ENCODE measurements at regions of chr3 and their contacts with region 1.

Region 1: GRCh38 chr3:143001369-143002082 is at the start of gene U2SURP:
- DNase-seq: peak; percentile 93 to 95
- H3K4me3 ChIP-seq: peak within 1 kb of the TSS; percentile 89 to 95 (median 94)
- H3K27ac ChIP-seq: peak within 1 kb of the TSS; percentile 97
- H3K4me1 ChIP-seq: peaks cover 0 to 4% of the 10 kb centered on the region in 2 donors
- H3K27me3 ChIP-seq: no peaks in the 10 kb centered on the region
- CTCF ChIP-seq: peak; percentile 10 to 32 (median 17)
- POLR2A ChIP-seq: no peak
- total RNA-seq, gene U2SURP: 79.8 to 122 (median 96.4) TPM

Region 2: GRCh38 chr3:141237701-141238521 is 1763.6 kb before region 1 on chr3:
- intact Hi-C with region 1: loop called (anchors 5 kb)
- DNase-seq: peak in 1 of 2 donors; percentile 23
- H3K4me3 ChIP-seq: no peak overlapping the region
- H3K27ac ChIP-seq: peak overlapping the region in 1 of 2 donors; percentile 21
- H3K4me1 ChIP-seq: no peaks in the 10 kb centered on the region
- H3K27me3 ChIP-seq: no peaks in the 10 kb centered on the region
- CTCF ChIP-seq: no peak
- POLR2A ChIP-seq: no peak

Region 3: DNA sequence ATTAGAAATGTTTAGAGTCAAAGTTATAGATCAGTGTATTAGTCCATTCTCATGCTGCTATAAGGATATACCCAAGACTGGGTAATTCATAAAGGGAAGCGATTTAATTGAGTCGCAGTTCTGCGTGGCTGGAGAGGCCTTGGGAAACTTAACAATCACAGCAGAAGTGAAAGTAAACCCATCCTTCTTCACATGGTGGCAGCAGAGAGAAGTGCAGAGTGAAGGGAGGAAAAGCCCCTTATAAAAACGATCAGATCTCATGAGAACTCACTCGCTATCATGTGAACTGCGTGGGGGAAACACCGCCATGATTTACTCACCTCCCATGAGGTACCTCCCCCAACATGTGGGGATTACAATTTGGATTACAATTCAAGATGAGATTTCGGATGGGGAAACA is 1841.6 kb after region 1 on chr3:
- intact Hi-C with region 1: no loop called
- DNase-seq: no peak
- H3K4me3 ChIP-seq: no peak overlapping the region
- H3K27ac ChIP-seq: no peak overlapping the region
- H3K4me1 ChIP-seq: no peaks in the 10 kb centered on the region
- H3K27me3 ChIP-seq: no peaks in the 10 kb centered on the region
- CTCF ChIP-seq: no peak
- POLR2A ChIP-seq: no peak